ENCODE measurements at regions of chr14 and their contacts with region 1.

Region 1: GRCh38 chr14:21334202-21334899 is 49.5 kb downstream of the SUPT16H start:
- DNase-seq: no peak
- H3K4me3 ChIP-seq: no peak overlapping the region
- H3K27ac ChIP-seq: no peak overlapping the region
- H3K4me1 ChIP-seq: no peaks in the 10 kb centered on the region
- H3K27me3 ChIP-seq: no peaks in the 10 kb centered on the region
- CTCF ChIP-seq: no peak
- POLR2A ChIP-seq: no peak

Region 2: DNA sequence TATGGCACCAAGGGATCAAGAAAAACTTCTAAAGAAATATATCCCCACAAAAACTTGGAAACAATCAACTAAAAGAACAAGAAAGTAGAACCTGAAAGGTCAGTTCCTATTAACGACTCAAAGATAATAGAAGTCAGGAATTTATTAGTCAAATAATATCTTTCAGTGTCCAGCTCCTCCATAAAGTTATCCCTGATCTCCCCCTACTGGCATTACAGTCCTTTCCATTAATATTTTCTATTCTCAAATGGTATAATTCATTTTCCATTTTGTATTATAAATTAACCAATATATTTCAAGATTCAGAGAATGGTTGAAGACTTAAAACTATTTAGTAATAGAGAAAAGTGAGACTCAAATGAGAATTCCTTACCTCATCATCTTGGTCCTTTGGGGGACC is 61.1 kb after region 1 on chr14:
- intact Hi-C with region 1: loop called (anchors 2 kb)
- DNase-seq: no peak
- H3K4me3 ChIP-seq: no peak overlapping the region
- H3K27ac ChIP-seq: no peak overlapping the region
- H3K4me1 ChIP-seq: no peaks in the 10 kb centered on the region
- H3K27me3 ChIP-seq: no peaks in the 10 kb centered on the region
- CTCF ChIP-seq: no peak
- POLR2A ChIP-seq: no peak

Region 3: GRCh38 chr14:21543521-21543960 is 209.2 kb after region 1 on chr14:
- intact Hi-C with region 1: no loop called
- DNase-seq: no peak
- H3K4me3 ChIP-seq: no peak overlapping the region
- H3K27ac ChIP-seq: no peak overlapping the region
- H3K4me1 ChIP-seq: no peaks in the 10 kb centered on the region
- H3K27me3 ChIP-seq: no peaks in the 10 kb centered on the region
- CTCF ChIP-seq: no peak
- POLR2A ChIP-seq: no peak

Measured in breast epithelium (tissue), 4 donors.